GM10248 (cell line): ENCODE measurements at regions of chr12 and their contacts with region 1.

Region 1: DNA sequence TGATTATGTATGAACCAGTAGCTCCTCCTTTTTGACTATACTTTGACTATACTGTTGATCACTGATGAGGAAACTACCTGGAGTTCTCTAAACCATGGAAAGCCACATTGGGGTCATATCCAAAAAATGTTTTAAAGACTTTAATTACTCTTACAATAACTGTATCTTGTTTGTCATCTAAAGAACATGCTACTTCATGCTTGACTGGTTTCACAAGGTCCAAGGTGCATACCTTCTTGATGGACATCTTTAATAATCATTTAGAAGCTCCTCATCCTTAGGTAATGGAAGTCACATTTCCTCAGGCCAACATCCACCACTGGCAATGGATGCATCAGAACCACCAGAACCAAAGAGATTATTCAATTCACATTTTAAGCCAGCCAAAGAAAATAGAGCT is 29.9 kb downstream of the WASHC3 start:
- DNase-seq: no peak
- CTCF ChIP-seq: no peak

Region 2: GRCh38 chr12:102043928-102044327 is 12.1 kb after region 1 on chr12:
- CTCF ChIA-PET with region 1: interaction called, 11 read pairs
- POLR2A ChIA-PET with region 1: no interaction called
- DNase-seq: peak; percentile 18
- CTCF ChIP-seq: no peak